ENCODE measurements at regions of chr9 and their contacts with region 1.

Region 1: DNA sequence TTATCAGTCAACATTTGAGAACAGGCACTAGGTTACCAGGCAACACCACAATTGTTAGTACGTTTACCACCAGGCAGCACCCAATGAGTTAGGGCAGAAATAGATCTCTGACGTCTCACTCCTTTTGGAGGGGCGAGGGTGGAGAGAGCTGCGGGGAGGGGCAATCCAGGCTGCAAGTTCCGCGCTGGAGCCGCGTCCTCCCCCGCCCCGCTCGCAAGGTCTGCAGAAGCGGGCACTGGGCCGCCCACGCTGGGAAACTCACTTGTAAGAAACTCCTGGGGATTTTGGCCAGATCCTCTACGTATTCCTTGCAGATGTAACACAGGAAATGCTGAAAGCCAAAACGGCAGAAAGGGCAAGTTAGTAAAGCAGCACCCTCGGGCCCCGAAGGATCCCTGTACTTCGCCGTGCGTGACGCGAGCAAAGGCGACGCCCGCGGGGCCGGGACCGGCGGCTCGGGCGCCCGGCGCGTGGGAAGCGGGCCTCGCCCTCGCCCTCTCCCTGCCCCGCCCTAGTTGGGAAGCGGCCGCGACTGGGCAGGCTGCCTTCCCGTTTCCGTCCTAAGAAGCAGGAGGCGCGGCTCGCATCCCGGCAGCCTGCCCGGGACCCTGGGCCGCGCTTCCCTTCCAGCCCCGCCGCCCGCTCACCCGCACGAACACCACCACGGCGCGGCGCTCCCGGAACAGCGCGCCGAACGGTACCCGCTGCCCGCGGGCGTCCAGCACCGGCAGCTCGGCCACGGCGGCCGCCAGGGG is 497 bp downstream of the PRXL2C start:
- DNase-seq: peak; percentile 73 to 96
- H3K4me3 ChIP-seq: peak overlapping the region; percentile 61 to 73 (median 62)
- H3K27ac ChIP-seq: peak overlapping the region; percentile 95 to 99 (median 95)
- H3K4me1 ChIP-seq: peaks cover 4 to 41% (median 18%) of the 10 kb centered on the region in 4 donors
- H3K27me3 ChIP-seq: no peaks in the 10 kb centered on the region
- CTCF ChIP-seq: peak in 1 of 7 experiments; percentile 29
- EP300 ChIP-seq: no peak
- POLR2A ChIP-seq: no peak

Region 2: GRCh38 chr9:96436063-96436455 is 218.6 kb before region 1 on chr9:
- intact Hi-C with region 1: loop called (anchors 10 kb)
- DNase-seq: no peak
- H3K4me3 ChIP-seq: no peak overlapping the region
- H3K27ac ChIP-seq: no peak overlapping the region
- H3K4me1 ChIP-seq: no peaks in the 10 kb centered on the region
- H3K27me3 ChIP-seq: no peaks in the 10 kb centered on the region
- CTCF ChIP-seq: no peak
- EP300 ChIP-seq: no peak
- POLR2A ChIP-seq: no peak